ENCODE measurements at regions of chr4 and their contacts with region 1.

Region 1: GRCh38 chr4:10116580-10117358 is at the start of gene WDR1:
- DNase-seq: peak; percentile 84 to 95 (median 91)
- ATAC-seq: peak; percentile 89
- H3K4me3 ChIP-seq: peak within 1 kb of the TSS; percentile 78
- H3K4me3 Mint-ChIP-seq: peak within 1 kb of the TSS; percentile 93 to 99 (median 97)
- H3K27ac ChIP-seq: peak within 1 kb of the TSS; percentile 97
- H3K27ac Mint-ChIP-seq: peak within 1 kb of the TSS; percentile 96 to 100 (median 99)
- H3K4me1 ChIP-seq: peaks cover 35 to 66% of the 10 kb centered on the region in 2 donors
- H3K4me1 Mint-ChIP-seq: peaks cover 60 to 92% (median 86%) of the 10 kb centered on the region in 7 donors
- H3K27me3 ChIP-seq: no peaks in the 10 kb centered on the region
- H3K27me3 Mint-ChIP-seq: no peaks in the 10 kb centered on the region
- total RNA-seq, gene WDR1: 242 to 470 (median 330) TPM

Region 2: DNA sequence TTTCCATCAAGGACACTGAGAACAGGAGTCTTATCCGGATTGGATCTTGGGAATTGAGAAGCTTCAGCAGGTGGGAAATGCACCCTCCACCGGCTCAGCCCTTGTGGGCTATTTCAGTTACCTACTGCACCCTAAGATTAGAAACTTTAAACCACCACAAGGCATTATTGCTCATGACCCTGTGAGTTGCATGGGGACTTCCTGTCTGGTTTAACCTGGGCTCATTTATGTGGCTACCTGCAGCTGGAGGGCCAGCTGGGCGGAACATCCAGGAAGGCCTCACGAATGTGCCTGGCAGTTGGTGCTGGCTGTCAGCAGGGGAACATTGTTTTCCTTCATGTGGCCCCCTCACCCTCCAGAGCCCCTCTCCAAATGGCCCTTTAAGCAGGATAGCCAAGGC is 508.5 kb before region 1 on chr4:
- CTCF ChIA-PET with region 1: no interaction called
- POLR2A ChIA-PET with region 1: no interaction called
- intact Hi-C with region 1: loop called (anchors 2 to 10 kb)
- DNase-seq: no peak
- ATAC-seq: no peak
- H3K4me3 ChIP-seq: no peak overlapping the region
- H3K4me3 Mint-ChIP-seq: no peak overlapping the region
- H3K27ac ChIP-seq: no peak overlapping the region
- H3K27ac Mint-ChIP-seq: no peak overlapping the region
- H3K4me1 ChIP-seq: peaks cover 8 to 9% of the 10 kb centered on the region in 2 donors
- H3K4me1 Mint-ChIP-seq: peaks cover 20 to 36% (median 29%) of the 10 kb centered on the region in 7 donors
- H3K27me3 ChIP-seq: no peaks in the 10 kb centered on the region
- H3K27me3 Mint-ChIP-seq: peaks cover 0 to 5% (median 0%) of the 10 kb centered on the region in 5 donors

Region 3: GRCh38 chr4:10033191-10033881 is 83.4 kb before region 1 on chr4:
- CTCF ChIA-PET with region 1: no interaction called
- POLR2A ChIA-PET with region 1: no interaction called
- intact Hi-C with region 1: no loop called
- DNase-seq: no peak
- ATAC-seq: peak; percentile 47
- H3K4me3 ChIP-seq: no peak overlapping the region
- H3K4me3 Mint-ChIP-seq: peak overlapping the region in 1 of 10 donors; percentile 24
- H3K27ac ChIP-seq: no peak overlapping the region
- H3K27ac Mint-ChIP-seq: peak overlapping the region in 1 of 9 donors; percentile 26
- H3K4me1 ChIP-seq: no peaks in the 10 kb centered on the region
- H3K4me1 Mint-ChIP-seq: peaks cover 0 to 20% (median 0%) of the 10 kb centered on the region in 7 donors
- H3K27me3 ChIP-seq: no peaks in the 10 kb centered on the region
- H3K27me3 Mint-ChIP-seq: peaks cover 0 to 5% (median 0%) of the 10 kb centered on the region in 5 donors

Region 4: GRCh38 chr4:10074767-10075105 is 42.0 kb before region 1 on chr4:
- CTCF ChIA-PET with region 1: no interaction called
- POLR2A ChIA-PET with region 1: interaction called, 7 read pairs
- intact Hi-C with region 1: loop called in 1 of 2 experiments (anchors 2 kb)
- DNase-seq: no peak
- ATAC-seq: peak; percentile 37
- H3K4me3 ChIP-seq: no peak overlapping the region
- H3K4me3 Mint-ChIP-seq: no peak overlapping the region
- H3K27ac ChIP-seq: no peak overlapping the region
- H3K27ac Mint-ChIP-seq: peak overlapping the region in 5 of 9 donors; percentile 13 to 74 (median 33)
- H3K4me1 ChIP-seq: peaks cover 0 to 2% of the 10 kb centered on the region in 2 donors
- H3K4me1 Mint-ChIP-seq: peaks cover 0 to 8% (median 0%) of the 10 kb centered on the region in 7 donors
- H3K27me3 ChIP-seq: no peaks in the 10 kb centered on the region
- H3K27me3 Mint-ChIP-seq: no peaks in the 10 kb centered on the region

Region 5: DNA sequence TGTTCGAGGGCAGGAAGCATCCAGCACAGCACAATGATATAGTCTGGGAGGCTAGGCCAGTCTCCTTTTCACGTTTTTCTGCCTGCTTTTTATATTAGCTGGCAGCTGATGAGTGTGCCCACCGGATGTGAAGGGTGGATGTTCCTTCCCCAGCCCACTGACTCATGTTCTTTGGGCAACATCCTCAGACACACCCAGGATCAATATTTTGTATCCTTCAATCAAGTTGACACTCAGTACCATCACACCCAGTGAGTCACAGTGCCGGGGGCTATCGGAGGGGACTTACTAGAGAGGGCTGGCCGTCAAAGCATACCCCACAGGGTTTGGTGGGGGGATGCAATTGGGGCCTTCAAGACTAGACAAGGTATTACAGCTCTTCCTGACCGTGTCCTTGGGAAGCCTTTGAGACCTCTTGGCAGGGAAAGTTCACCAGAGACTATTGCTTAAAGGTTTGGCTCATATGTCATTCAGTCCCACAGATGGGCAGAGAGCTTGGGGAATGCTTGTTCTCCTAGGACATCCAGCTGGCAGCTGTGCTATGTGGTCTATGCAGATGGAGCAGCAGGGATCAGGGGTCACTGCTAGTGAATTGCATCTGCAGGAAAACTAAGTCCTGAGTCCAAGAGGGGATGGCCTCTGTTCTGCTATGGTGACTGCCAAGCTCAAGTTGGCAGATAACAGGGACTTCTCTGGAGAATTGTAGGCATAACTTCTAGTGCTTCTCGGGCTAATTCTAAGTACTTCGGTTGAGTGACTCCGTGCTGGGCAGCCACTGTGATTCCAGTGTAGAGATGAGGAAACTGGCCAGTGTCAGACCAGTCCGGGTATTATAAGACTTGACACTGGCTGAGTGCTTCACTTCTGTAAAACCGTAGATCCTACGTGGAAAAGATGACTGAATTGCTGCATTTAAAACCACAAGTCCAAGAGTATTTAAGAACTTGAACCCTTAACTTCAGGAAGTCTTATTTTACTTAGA is 12.7 kb after region 1 on chr4:
- CTCF ChIA-PET with region 1: interaction called, 4 read pairs
- POLR2A ChIA-PET with region 1: interaction called, 46 read pairs
- intact Hi-C with region 1: no loop called
- DNase-seq: no peak
- ATAC-seq: no peak
- H3K4me3 ChIP-seq: no peak overlapping the region
- H3K4me3 Mint-ChIP-seq: no peak overlapping the region
- H3K27ac ChIP-seq: no peak overlapping the region
- H3K27ac Mint-ChIP-seq: no peak overlapping the region
- H3K4me1 ChIP-seq: peaks cover 0 to 8% of the 10 kb centered on the region in 2 donors
- H3K4me1 Mint-ChIP-seq: peaks cover 0 to 16% (median 9%) of the 10 kb centered on the region in 7 donors
- H3K27me3 ChIP-seq: no peaks in the 10 kb centered on the region
- H3K27me3 Mint-ChIP-seq: no peaks in the 10 kb centered on the region

Region 6: GRCh38 chr4:10180927-10181782 is 64.4 kb after region 1 on chr4:
- CTCF ChIA-PET with region 1: interaction called, 3 read pairs
- POLR2A ChIA-PET with region 1: interaction called, 10 read pairs
- intact Hi-C with region 1: loop called in 1 of 2 experiments (anchors 1 kb)
- DNase-seq: peak in 6 of 9 donors; percentile 8 to 45 (median 27)
- ATAC-seq: peak; percentile 82
- H3K4me3 ChIP-seq: no peak overlapping the region
- H3K4me3 Mint-ChIP-seq: peak overlapping the region in 2 of 10 donors; percentile 9 to 53
- H3K27ac ChIP-seq: no peak overlapping the region
- H3K27ac Mint-ChIP-seq: peak overlapping the region in 2 of 9 donors; percentile 40 to 92
- H3K4me1 ChIP-seq: peaks cover 0 to 7% of the 10 kb centered on the region in 2 donors
- H3K4me1 Mint-ChIP-seq: peaks cover 8 to 41% (median 24%) of the 10 kb centered on the region in 7 donors
- H3K27me3 ChIP-seq: no peaks in the 10 kb centered on the region
- H3K27me3 Mint-ChIP-seq: no peaks in the 10 kb centered on the region

Region 7: GRCh38 chr4:10722957-10723356 is 606.2 kb after region 1 on chr4:
- CTCF ChIA-PET with region 1: no interaction called
- POLR2A ChIA-PET with region 1: no interaction called
- intact Hi-C with region 1: loop called in 1 of 2 experiments (anchors 5 kb)
- DNase-seq: peak in 3 of 9 donors; percentile 6 to 24 (median 8)
- ATAC-seq: peak; percentile 42
- H3K4me3 ChIP-seq: no peak overlapping the region
- H3K4me3 Mint-ChIP-seq: peak overlapping the region in 1 of 10 donors; percentile 39
- H3K27ac ChIP-seq: no peak overlapping the region
- H3K27ac Mint-ChIP-seq: peak overlapping the region in 1 of 9 donors; percentile 51
- H3K4me1 ChIP-seq: no peaks in the 10 kb centered on the region
- H3K4me1 Mint-ChIP-seq: peaks cover 0 to 39% (median 2%) of the 10 kb centered on the region in 7 donors
- H3K27me3 ChIP-seq: no peaks in the 10 kb centered on the region
- H3K27me3 Mint-ChIP-seq: peaks cover 0 to 3% (median 2%) of the 10 kb centered on the region in 5 donors

Region 8: GRCh38 chr4:10762561-10762960 is 645.8 kb after region 1 on chr4:
- CTCF ChIA-PET with region 1: no interaction called
- POLR2A ChIA-PET with region 1: no interaction called
- intact Hi-C with region 1: no loop called
- DNase-seq: no peak
- ATAC-seq: no peak
- H3K4me3 ChIP-seq: no peak overlapping the region
- H3K4me3 Mint-ChIP-seq: no peak overlapping the region
- H3K27ac ChIP-seq: no peak overlapping the region
- H3K27ac Mint-ChIP-seq: no peak overlapping the region
- H3K4me1 ChIP-seq: no peaks in the 10 kb centered on the region
- H3K4me1 Mint-ChIP-seq: no peaks in the 10 kb centered on the region
- H3K27me3 ChIP-seq: no peaks in the 10 kb centered on the region
- H3K27me3 Mint-ChIP-seq: no peaks in the 10 kb centered on the region